ENCODE measurements at regions of chr15 and their contacts with region 1.

Region 1: GRCh38 chr15:45118131-45118588 is 4.0 kb downstream of the DUOXA2 start:
- DNase-seq: peak; percentile 66 to 89 (median 81)
- ATAC-seq: peak; percentile 95 to 99 (median 97)
- H3K4me3 ChIP-seq: peak overlapping the region; percentile 7 to 63
- H3K4me3 Mint-ChIP-seq: peak overlapping the region; percentile 63 to 72 (median 71)
- H3K27ac ChIP-seq: no peak overlapping the region
- H3K27ac Mint-ChIP-seq: no peak overlapping the region
- H3K4me1 ChIP-seq: peaks cover 8 to 40% of the 10 kb centered on the region in 2 experiments
- H3K4me1 Mint-ChIP-seq: peaks cover 35 to 43% (median 37%) of the 10 kb centered on the region in 3 donors
- H3K27me3 ChIP-seq: peaks cover 28 to 91% of the 10 kb centered on the region in 2 experiments
- H3K27me3 Mint-ChIP-seq: peaks cover 59 to 79% of the 10 kb centered on the region in 2 donors

Region 2: DNA sequence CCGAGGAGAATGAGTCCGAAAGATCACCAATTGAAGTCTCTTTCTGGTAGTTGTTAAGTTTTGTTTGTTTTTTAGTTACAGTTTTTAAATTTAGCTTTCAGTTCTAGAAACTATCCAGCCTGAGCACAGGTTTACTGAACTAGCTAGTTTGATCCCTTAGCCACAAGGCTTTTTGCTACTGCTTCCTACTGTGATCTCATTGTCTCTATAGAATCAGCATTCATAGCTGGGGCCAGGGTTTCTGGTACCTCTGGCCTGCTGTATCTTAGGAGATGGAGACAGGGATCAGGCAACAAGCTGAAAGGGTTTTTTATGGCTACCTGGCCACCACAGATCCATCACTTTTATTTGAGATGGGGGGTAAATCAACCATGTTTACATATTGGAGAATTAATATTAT is 792.6 kb before region 1 on chr15:
- CTCF ChIA-PET with region 1: interaction called in 1 of 2 experiments, 11 read pairs
- POLR2A ChIA-PET with region 1: no interaction called
- DNase-seq: no peak
- ATAC-seq: no peak
- H3K4me3 ChIP-seq: no peak overlapping the region
- H3K4me3 Mint-ChIP-seq: no peak overlapping the region
- H3K27ac ChIP-seq: no peak overlapping the region
- H3K27ac Mint-ChIP-seq: no peak overlapping the region
- H3K4me1 ChIP-seq: no peaks in the 10 kb centered on the region
- H3K4me1 Mint-ChIP-seq: peaks cover 5 to 18% (median 7%) of the 10 kb centered on the region in 3 donors
- H3K27me3 ChIP-seq: no peaks in the 10 kb centered on the region
- H3K27me3 Mint-ChIP-seq: no peaks in the 10 kb centered on the region

Measured in T-cell (primary cell).